ENCODE measurements at regions of chr5 and their contacts with region 1.

Region 1: DNA sequence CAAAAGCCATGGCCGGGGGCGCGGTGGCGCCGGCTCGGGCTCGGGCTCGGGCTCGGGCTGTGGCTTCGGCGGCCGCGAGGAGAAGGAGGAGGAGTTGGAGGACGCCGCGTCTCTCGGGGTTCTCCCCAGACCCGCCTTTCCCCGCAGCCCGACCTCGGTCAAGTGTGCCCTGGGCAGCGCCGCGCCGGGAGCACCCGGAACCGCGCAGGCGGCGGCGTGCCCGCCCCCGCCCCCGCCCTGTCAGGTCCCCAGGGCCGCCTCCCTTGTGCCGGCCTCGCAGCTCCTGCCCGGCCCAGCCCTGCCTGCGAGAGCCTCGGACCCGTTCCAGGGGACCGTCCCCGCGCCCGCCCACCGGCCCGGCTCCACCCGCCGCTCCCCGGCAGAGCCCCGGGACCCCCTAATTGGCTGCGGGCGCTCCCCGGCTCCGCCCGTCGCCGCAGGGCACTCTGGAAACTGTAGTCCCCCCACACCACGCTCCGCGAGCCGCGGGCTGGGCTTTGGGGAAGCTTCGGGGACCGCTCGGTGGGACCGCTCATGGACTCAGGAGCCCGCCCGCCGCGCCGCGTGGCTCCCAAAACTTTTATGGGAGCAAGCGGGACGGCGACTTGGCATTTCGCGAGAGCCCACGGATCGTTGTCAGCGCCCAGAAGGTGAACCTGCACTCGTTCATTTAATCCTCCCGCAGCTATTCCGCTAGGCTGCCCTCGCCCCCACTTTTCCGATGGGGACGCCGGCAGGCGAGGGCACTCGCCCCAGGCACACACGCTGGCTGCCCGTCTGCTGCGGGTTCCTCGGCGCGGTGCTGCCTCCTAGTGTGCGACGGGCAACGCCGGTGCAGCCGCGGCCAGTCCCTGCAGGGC is at the start of gene STK10:
- DNase-seq: peak; percentile 92
- H3K4me3 Mint-ChIP-seq: peak within 1 kb of the TSS; percentile 96
- H3K27ac Mint-ChIP-seq: peak within 1 kb of the TSS; percentile 91
- H3K4me1 Mint-ChIP-seq: peaks cover 24% of the 10 kb centered on the region
- H3K27me3 Mint-ChIP-seq: peaks cover 5% of the 10 kb centered on the region
- total RNA-seq, gene STK10: 301 to 316 TPM

Region 2: GRCh38 chr5:172006321-172007174 is 181.7 kb before region 1 on chr5 and contains the start of gene FBXW11:
- CTCF ChIA-PET with region 1: interaction called, 19 read pairs
- POLR2A ChIA-PET with region 1: interaction called, 30 read pairs
- DNase-seq: peak; percentile 95
- H3K4me3 Mint-ChIP-seq: peak within 1 kb of the TSS; percentile 90
- H3K27ac Mint-ChIP-seq: peak within 1 kb of the TSS; percentile 94
- H3K4me1 Mint-ChIP-seq: peaks cover 50% of the 10 kb centered on the region
- H3K27me3 Mint-ChIP-seq: no peaks in the 10 kb centered on the region
- total RNA-seq, gene FBXW11: 37.4 to 38.8 TPM

Region 3: GRCh38 chr5:172065501-172065990 is 122.7 kb before region 1 on chr5:
- CTCF ChIA-PET with region 1: interaction called, 27 read pairs
- POLR2A ChIA-PET with region 1: interaction called, 9 read pairs
- DNase-seq: no peak
- H3K4me3 Mint-ChIP-seq: no peak overlapping the region
- H3K27ac Mint-ChIP-seq: peak overlapping the region; percentile 82
- H3K4me1 Mint-ChIP-seq: peaks cover 54% of the 10 kb centered on the region
- H3K27me3 Mint-ChIP-seq: no peaks in the 10 kb centered on the region

Region 4: GRCh38 chr5:172150514-172151425 is 37.5 kb before region 1 on chr5:
- CTCF ChIA-PET with region 1: interaction called, 22 read pairs
- POLR2A ChIA-PET with region 1: interaction called, 7 read pairs
- DNase-seq: peak; percentile 42
- H3K4me3 Mint-ChIP-seq: peak overlapping the region; percentile 46
- H3K27ac Mint-ChIP-seq: peak overlapping the region; percentile 85
- H3K4me1 Mint-ChIP-seq: peaks cover 76% of the 10 kb centered on the region
- H3K27me3 Mint-ChIP-seq: no peaks in the 10 kb centered on the region

Region 5: DNA sequence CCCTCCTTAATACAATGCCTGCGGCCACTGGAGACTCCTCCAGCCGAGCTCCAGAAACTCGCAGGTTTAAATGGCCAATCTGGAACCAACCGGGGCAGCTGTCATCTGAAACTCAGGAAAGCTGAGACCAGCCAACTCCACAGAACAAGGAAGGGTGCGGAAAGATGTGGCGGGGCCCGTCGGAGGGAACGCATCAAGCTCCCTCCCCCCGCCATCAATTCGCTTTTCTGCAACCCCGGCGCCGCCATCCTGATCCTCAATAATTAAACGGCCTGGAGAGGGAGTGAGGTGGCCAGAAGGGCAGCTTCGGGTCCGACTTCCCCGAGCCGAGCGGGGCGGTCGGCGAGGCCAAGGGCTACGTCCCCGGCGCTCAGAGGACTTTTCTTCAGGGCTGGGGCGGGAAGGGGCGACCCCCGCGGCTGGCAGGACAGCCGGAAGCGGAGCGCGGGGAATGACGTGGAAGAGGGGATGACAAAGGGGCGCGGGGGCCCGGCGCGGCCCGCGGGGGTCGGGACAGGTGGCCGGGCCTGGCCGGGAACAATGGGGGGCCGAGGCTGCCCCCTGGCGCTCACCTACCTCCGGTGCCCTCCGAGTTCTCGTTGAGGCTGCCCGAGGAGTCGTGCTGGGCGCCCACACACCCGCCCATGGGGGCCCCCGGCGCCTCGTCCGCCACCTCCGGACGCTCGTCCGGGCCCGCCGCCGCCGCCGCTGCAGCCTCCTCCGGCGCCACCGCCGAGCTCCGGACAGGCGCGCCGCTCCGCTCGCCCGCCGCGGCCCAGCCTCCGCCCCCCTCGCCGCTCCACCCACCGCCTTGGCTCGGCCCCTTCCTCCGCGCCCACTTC is 95.0 kb after region 1 on chr5 and contains the start of gene UBTD2:
- CTCF ChIA-PET with region 1: interaction called, 49 read pairs
- POLR2A ChIA-PET with region 1: interaction called, 6 read pairs
- DNase-seq: peak; percentile 79
- H3K4me3 Mint-ChIP-seq: peak within 1 kb of the TSS; percentile 84
- H3K27ac Mint-ChIP-seq: peak within 1 kb of the TSS; percentile 35
- H3K4me1 Mint-ChIP-seq: peaks cover 23% of the 10 kb centered on the region
- H3K27me3 Mint-ChIP-seq: peaks cover 11% of the 10 kb centered on the region
- total RNA-seq, gene UBTD2: 10.2 to 10.6 TPM

Region 6: GRCh38 chr5:172403189-172403796 is 215.0 kb after region 1 on chr5:
- CTCF ChIA-PET with region 1: no interaction called
- POLR2A ChIA-PET with region 1: no interaction called
- DNase-seq: no peak
- H3K4me3 Mint-ChIP-seq: no peak overlapping the region
- H3K27ac Mint-ChIP-seq: no peak overlapping the region
- H3K4me1 Mint-ChIP-seq: no peaks in the 10 kb centered on the region
- H3K27me3 Mint-ChIP-seq: peaks cover 37% of the 10 kb centered on the region

Measured in activated CD4-positive, alpha-beta memory T cell treated with anti-CD3 and anti-CD28 coated beads, Interleukin-2, amount 10 ng/mL, durations not matched to agents 7 days and 5 days (primary cell).